Caco-2 (cell line): ENCODE measurements at regions of chr18 and their contacts with region 1.

Region 1: GRCh38 chr18:45517181-45517741 is 98.0 kb upstream of the SLC14A2 start:
- DNase-seq: no peak
- H3K4me3 ChIP-seq: no peak overlapping the region
- H3K4me3 Mint-ChIP-seq: no peak overlapping the region
- H3K27ac Mint-ChIP-seq: no peak overlapping the region
- H3K4me1 ChIP-seq: no peaks in the 10 kb centered on the region
- H3K4me1 Mint-ChIP-seq: no peaks in the 10 kb centered on the region
- H3K27me3 ChIP-seq: no peaks in the 10 kb centered on the region
- H3K27me3 Mint-ChIP-seq: no peaks in the 10 kb centered on the region
- CTCF ChIP-seq: no peak

Region 2: GRCh38 chr18:45487581-45487980 is 29.7 kb before region 1 on chr18:
- CTCF ChIA-PET with region 1: no interaction called
- POLR2A ChIA-PET with region 1: no interaction called
- intact Hi-C with region 1: loop called (anchors 1 kb)
- DNase-seq: no peak
- H3K4me3 ChIP-seq: no peak overlapping the region
- H3K4me3 Mint-ChIP-seq: no peak overlapping the region
- H3K27ac Mint-ChIP-seq: no peak overlapping the region
- H3K4me1 ChIP-seq: no peaks in the 10 kb centered on the region
- H3K4me1 Mint-ChIP-seq: no peaks in the 10 kb centered on the region
- H3K27me3 ChIP-seq: no peaks in the 10 kb centered on the region
- H3K27me3 Mint-ChIP-seq: no peaks in the 10 kb centered on the region
- CTCF ChIP-seq: no peak